GM12878 (cell line): ENCODE measurements at regions of chr1 and their contacts with region 1.

Region 1: GRCh38 chr1:230167419-230167852 is 100.4 kb downstream of the GALNT2 start:
- DNase-seq: peak; percentile 54
- ATAC-seq: peak; percentile 74
- H3K4me3 ChIP-seq: no peak overlapping the region
- H3K27ac ChIP-seq: no peak overlapping the region
- H3K4me1 ChIP-seq: peaks cover 26% of the 10 kb centered on the region
- H3K27me3 ChIP-seq: no peaks in the 10 kb centered on the region
- CTCF ChIP-seq: peak; percentile 67 to 82 (median 79)
- EP300 ChIP-seq: no peak
- POLR2A ChIP-seq: no peak
- RAD21 ChIP-seq: peak; percentile 92

Region 2: GRCh38 chr1:229714964-229715603 is 452.4 kb before region 1 on chr1:
- CTCF ChIA-PET with region 1: interaction called, 8 read pairs
- POLR2A ChIA-PET with region 1: no interaction called
- RAD21 ChIA-PET with region 1: interaction called, 3 read pairs
- SMC1A ChIA-PET with region 1: interaction called, 5 read pairs
- in situ Hi-C with region 1: no loop called
- intact Hi-C with region 1: loop called (anchors 5 kb)
- DNase-seq: no peak
- ATAC-seq: peak; percentile 96
- H3K4me3 ChIP-seq: no peak overlapping the region
- H3K27ac ChIP-seq: no peak overlapping the region
- H3K4me1 ChIP-seq: no peaks in the 10 kb centered on the region
- H3K27me3 ChIP-seq: no peaks in the 10 kb centered on the region; a peak in 1 of 4 replicates
- CTCF ChIP-seq: peak; percentile 56 to 68 (median 62)
- EP300 ChIP-seq: no peak
- POLR2A ChIP-seq: no peak
- RAD21 ChIP-seq: peak; percentile 62

Region 3: GRCh38 chr1:230066466-230067404 is 100.7 kb before region 1 on chr1 and contains the start of gene GALNT2:
- CTCF ChIA-PET with region 1: interaction called, 5 read pairs
- POLR2A ChIA-PET with region 1: no interaction called
- RAD21 ChIA-PET with region 1: interaction called, 7 read pairs
- SMC1A ChIA-PET with region 1: interaction called, 3 read pairs
- in situ Hi-C with region 1: no loop called
- intact Hi-C with region 1: loop called (anchors 1 kb)
- DNase-seq: peak; percentile 48
- ATAC-seq: peak; percentile 83
- H3K4me3 ChIP-seq: peak within 1 kb of the TSS; percentile 96
- H3K27ac ChIP-seq: peak within 1 kb of the TSS; percentile 77
- H3K4me1 ChIP-seq: no peaks in the 10 kb centered on the region; the same call in 1 of the 2 replicates
- H3K27me3 ChIP-seq: no peaks in the 10 kb centered on the region
- CTCF ChIP-seq: no peak
- EP300 ChIP-seq: peak; percentile 36 to 56; a peak in 1 of 4 replicates
- POLR2A ChIP-seq: peak; percentile 78
- RAD21 ChIP-seq: peak; percentile 20; the same call in 1 of the 2 replicates
- polyA plus RNA-seq, gene GALNT2: 0.52 to 1.2 TPM

Region 4: DNA sequence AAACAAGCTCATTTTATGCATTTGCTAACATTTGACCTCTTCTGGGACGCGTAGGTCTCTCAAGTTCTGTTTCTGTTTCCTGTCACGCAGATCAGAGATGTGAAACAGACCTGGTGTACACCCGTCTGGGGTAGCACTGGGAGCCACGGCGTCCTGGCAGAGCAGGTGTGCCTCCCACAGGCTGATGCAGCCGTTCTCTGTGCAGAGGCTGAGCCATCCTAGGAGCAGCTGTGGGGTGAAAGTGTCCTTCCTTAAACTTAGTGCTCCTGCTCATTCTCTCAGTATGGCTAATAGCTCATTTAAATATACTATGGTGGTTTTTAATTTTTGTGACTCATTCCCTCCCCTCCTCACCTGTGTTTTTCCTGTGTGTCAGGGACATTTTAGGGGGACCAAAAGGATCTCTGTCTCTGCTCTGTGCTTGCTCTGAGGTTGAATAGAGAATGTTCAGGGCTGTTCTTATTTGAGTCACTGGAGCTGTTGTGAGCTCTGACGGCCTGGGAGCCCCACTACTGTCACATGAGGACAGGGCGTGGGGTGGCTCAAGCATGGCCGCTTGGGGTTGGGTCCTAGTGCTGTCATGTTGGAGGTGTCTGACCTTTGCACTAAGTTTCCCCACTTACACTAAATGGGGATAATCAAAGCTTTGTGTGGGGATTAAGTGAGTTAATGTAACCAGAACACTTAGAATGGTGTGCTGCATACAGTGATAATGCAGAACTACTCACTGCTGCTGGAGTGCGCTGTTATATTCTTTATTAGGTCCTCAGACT is 57.4 kb before region 1 on chr1:
- CTCF ChIA-PET with region 1: interaction called, 25 read pairs
- POLR2A ChIA-PET with region 1: interaction called, 5 read pairs
- RAD21 ChIA-PET with region 1: interaction called, 11 read pairs
- SMC1A ChIA-PET with region 1: interaction called, 13 read pairs
- in situ Hi-C with region 1: no loop called
- intact Hi-C with region 1: no loop called
- DNase-seq: peak; percentile 88
- ATAC-seq: peak; percentile 90
- H3K4me3 ChIP-seq: no peak overlapping the region
- H3K27ac ChIP-seq: peak overlapping the region; percentile 64
- H3K4me1 ChIP-seq: peaks cover 57% of the 10 kb centered on the region
- H3K27me3 ChIP-seq: no peaks in the 10 kb centered on the region
- CTCF ChIP-seq: peak; percentile 27 to 49 (median 29); a peak in 4 of 6 replicates
- EP300 ChIP-seq: peak; percentile 56 to 81; a peak in 3 of 4 replicates
- POLR2A ChIP-seq: peak; percentile 64
- RAD21 ChIP-seq: peak; percentile 53

Region 5: DNA sequence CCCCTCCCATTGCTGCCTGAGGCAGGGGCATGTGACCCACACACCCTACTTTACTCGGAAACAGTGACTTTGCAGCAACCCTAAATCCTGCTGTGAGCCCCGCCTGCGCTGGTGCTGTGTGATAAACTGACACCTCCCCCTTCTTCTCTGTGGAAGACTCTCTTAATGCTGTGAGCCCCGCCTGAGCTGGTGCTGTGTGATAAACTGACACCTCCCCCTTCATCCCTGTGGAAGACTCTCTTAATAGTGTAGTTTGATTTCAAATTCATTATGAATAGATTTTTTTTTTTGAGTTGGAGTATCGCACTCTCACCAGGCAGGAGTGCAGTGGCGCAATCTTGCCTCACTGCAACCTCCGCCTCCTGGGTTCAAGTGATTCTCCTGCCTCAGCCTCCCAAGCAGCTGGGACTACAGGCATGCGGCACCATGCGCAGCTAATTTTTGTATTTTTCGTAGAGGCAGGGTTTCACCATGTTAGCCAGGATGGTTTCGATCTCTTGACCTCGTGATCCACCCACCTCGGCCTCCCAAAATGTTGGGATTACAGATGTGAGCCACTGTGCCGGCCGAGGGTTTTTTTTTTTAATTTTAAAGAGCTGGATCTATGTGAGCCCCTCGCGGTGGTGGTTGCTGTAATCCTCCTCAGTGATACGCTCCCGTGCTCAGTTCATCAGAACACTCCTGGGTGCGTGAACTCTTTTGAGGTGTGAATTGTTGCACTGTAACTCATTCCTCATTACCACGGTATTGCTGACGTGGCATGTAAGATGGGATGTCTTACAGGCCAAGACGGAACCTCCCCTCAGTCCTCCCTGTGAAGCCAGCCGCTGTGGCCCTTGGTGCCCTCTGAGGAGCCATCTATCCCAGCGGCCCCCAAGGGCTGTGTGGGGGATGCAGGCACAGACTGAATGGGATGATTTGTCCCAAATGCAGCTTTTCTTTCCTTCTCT is 40.1 kb before region 1 on chr1:
- CTCF ChIA-PET with region 1: interaction called, 44 read pairs
- POLR2A ChIA-PET with region 1: interaction called, 4 read pairs
- RAD21 ChIA-PET with region 1: interaction called, 30 read pairs
- SMC1A ChIA-PET with region 1: interaction called, 26 read pairs
- in situ Hi-C with region 1: no loop called
- intact Hi-C with region 1: loop called (anchors 1 kb)
- DNase-seq: no peak
- ATAC-seq: no peak
- H3K4me3 ChIP-seq: no peak overlapping the region
- H3K27ac ChIP-seq: no peak overlapping the region
- H3K4me1 ChIP-seq: peaks cover 40% of the 10 kb centered on the region
- H3K27me3 ChIP-seq: no peaks in the 10 kb centered on the region
- CTCF ChIP-seq: no peak
- EP300 ChIP-seq: no peak; a peak in 1 of 4 replicates
- POLR2A ChIP-seq: no peak
- RAD21 ChIP-seq: no peak